CD8-positive, alpha-beta memory T cell (primary cell): ENCODE measurements at regions of chr10 and their contacts with region 1.

Region 1: GRCh38 chr10:96387161-96387560 is 28.4 kb upstream of the OPALIN start:
- DNase-seq: no peak
- H3K4me3 ChIP-seq: no peak overlapping the region
- H3K4me3 Mint-ChIP-seq: no peak overlapping the region
- H3K27ac ChIP-seq: no peak overlapping the region
- H3K27ac Mint-ChIP-seq: no peak overlapping the region
- H3K4me1 ChIP-seq: no peaks in the 10 kb centered on the region
- H3K4me1 Mint-ChIP-seq: no peaks in the 10 kb centered on the region
- H3K27me3 ChIP-seq: no peaks in the 10 kb centered on the region
- H3K27me3 Mint-ChIP-seq: peaks cover 12 to 43% of the 10 kb centered on the region in 2 donors

Region 2: DNA sequence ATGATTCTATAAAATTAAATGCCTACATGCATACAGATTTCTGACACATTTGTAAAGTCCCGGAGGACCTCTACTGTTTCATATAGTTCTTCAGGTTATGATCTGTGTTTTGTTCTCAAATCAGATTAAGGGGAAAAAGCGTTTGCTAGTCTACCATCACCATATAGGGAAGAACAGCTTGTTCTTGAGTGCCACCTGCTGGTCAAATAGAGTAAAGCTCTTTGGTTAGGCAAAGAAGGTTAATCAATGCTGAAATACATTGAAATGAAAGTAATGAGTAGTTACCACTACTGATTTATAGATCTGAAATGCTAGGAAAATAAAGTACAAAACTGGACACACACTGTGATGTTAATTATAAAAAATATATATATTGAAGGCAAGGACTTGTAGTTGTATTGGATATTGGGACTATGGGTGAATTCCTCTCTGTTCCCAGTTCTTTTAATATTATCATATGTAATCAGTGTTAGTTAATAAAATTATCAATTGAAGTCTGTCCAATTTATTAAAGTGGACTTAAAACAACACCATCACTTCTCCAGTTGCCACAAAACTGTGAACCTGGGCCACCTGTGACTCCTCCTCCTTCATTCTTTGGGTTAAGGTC is 1023.8 kb before region 1 on chr10:
- CTCF ChIA-PET with region 1: no interaction called
- POLR2A ChIA-PET with region 1: no interaction called
- DNase-seq: peak in 4 of 5 donors; percentile 18 to 60 (median 36)
- H3K4me3 ChIP-seq: no peak overlapping the region
- H3K4me3 Mint-ChIP-seq: no peak overlapping the region
- H3K27ac ChIP-seq: no peak overlapping the region
- H3K27ac Mint-ChIP-seq: no peak overlapping the region
- H3K4me1 ChIP-seq: no peaks in the 10 kb centered on the region
- H3K4me1 Mint-ChIP-seq: no peaks in the 10 kb centered on the region
- H3K27me3 ChIP-seq: no peaks in the 10 kb centered on the region
- H3K27me3 Mint-ChIP-seq: peaks cover 7 to 17% of the 10 kb centered on the region in 2 donors

Region 3: DNA sequence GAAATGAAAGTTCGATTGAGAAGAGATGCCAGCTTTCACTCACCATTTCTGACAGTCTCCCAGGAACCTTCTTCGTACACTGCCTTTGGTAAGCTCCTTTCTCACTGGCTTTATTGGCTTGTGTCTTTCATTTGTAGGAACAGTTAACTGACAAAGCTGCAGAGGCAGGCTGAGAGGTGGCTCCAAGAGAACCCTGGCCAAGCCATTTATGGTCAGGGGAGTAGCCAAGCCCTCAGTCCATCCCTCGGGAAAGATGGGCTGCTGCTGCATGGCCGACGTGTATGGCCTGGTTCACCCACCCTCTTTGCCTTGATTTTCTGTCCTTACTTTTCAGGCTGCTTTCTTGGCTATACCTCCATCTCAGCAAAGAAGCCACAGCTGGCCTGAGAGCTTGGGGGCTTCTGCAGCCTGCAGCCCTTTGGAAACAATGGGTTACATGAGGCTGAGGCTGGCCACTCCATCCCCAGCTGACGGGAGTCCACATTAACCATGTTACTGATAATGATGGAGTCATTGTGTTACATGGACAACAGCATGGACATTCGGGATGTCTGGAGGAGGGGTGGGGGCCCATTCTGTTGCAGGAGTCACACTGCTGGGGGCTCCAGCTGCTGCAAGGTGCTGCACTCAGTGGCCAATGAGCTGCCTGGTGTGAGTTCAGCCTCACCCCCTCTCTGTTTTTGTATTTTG is 28.2 kb before region 1 on chr10 and contains the start of gene OPALIN:
- CTCF ChIA-PET with region 1: no interaction called
- POLR2A ChIA-PET with region 1: no interaction called
- DNase-seq: no peak
- H3K4me3 ChIP-seq: no peak within 1 kb of the TSS
- H3K4me3 Mint-ChIP-seq: no peak within 1 kb of the TSS
- H3K27ac ChIP-seq: no peak within 1 kb of the TSS
- H3K27ac Mint-ChIP-seq: no peak within 1 kb of the TSS
- H3K4me1 ChIP-seq: no peaks in the 10 kb centered on the region
- H3K4me1 Mint-ChIP-seq: no peaks in the 10 kb centered on the region
- H3K27me3 ChIP-seq: no peaks in the 10 kb centered on the region
- H3K27me3 Mint-ChIP-seq: peaks cover 13 to 38% of the 10 kb centered on the region in 2 donors
- total RNA-seq, gene OPALIN: not detected

Region 4: GRCh38 chr10:96374985-96375830 is 12.0 kb before region 1 on chr10:
- CTCF ChIA-PET with region 1: interaction called, 14 read pairs
- POLR2A ChIA-PET with region 1: no interaction called
- DNase-seq: peak; percentile 42 to 70 (median 50)
- H3K4me3 ChIP-seq: peak overlapping the region; percentile 55
- H3K4me3 Mint-ChIP-seq: peak overlapping the region; percentile 63 to 89 (median 78)
- H3K27ac ChIP-seq: no peak overlapping the region
- H3K27ac Mint-ChIP-seq: peak overlapping the region in 2 of 8 donors; percentile 29 to 72
- H3K4me1 ChIP-seq: no peaks in the 10 kb centered on the region
- H3K4me1 Mint-ChIP-seq: peaks cover 5 to 17% (median 10%) of the 10 kb centered on the region in 3 donors
- H3K27me3 ChIP-seq: no peaks in the 10 kb centered on the region
- H3K27me3 Mint-ChIP-seq: peaks cover 8 to 41% of the 10 kb centered on the region in 2 donors